ENCODE measurements at regions of chr5 and their contacts with region 1.

Region 1: GRCh38 chr5:135426102-135427082 is 20.8 kb downstream of the DCANP1 start:
- DNase-seq: no peak
- H3K4me3 ChIP-seq: no peak overlapping the region
- CTCF ChIP-seq: peak; percentile 68

Region 2: GRCh38 chr5:135154197-135154596 is 272.2 kb before region 1 on chr5:
- CTCF ChIA-PET with region 1: no interaction called
- POLR2A ChIA-PET with region 1: no interaction called
- DNase-seq: no peak
- H3K4me3 ChIP-seq: no peak overlapping the region
- CTCF ChIP-seq: no peak

Region 3: GRCh38 chr5:135332519-135333150 is 93.8 kb before region 1 on chr5:
- CTCF ChIA-PET with region 1: interaction called, 10 read pairs
- POLR2A ChIA-PET with region 1: no interaction called
- DNase-seq: no peak
- H3K4me3 ChIP-seq: no peak overlapping the region
- CTCF ChIP-seq: peak; percentile 32

Region 4: DNA sequence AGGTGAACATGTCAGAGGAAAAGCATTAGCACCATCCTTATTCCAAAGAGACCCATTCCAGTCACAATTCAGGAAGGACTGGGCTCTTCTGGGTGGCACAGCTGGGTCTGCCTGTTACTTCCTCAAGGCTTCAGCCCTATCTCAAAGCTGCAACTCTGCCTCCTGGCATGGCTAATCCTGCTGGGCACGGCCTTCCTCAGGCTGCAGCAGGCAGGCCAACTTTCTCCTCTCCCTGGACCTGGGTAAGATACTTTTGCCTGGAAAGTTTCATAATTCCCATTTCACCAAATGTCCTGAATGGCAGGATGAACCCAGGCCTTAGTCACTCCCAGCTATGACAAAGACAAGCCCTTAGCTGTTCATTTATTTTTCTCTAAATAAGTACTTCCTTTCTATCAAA is 77.5 kb before region 1 on chr5:
- CTCF ChIA-PET with region 1: interaction called, 48 read pairs
- POLR2A ChIA-PET with region 1: no interaction called
- DNase-seq: no peak
- H3K4me3 ChIP-seq: no peak overlapping the region
- CTCF ChIP-seq: no peak

Region 5: GRCh38 chr5:135400866-135401265 is 25.5 kb before region 1 on chr5:
- CTCF ChIA-PET with region 1: interaction called, 22 read pairs
- POLR2A ChIA-PET with region 1: interaction called, 3 read pairs
- DNase-seq: no peak
- H3K4me3 ChIP-seq: no peak overlapping the region
- CTCF ChIP-seq: no peak

Region 6: GRCh38 chr5:135437796-135438560 is 11.6 kb after region 1 on chr5:
- CTCF ChIA-PET with region 1: interaction called, 134 read pairs
- POLR2A ChIA-PET with region 1: interaction called, 4 read pairs
- DNase-seq: peak; percentile 68
- H3K4me3 ChIP-seq: no peak overlapping the region
- CTCF ChIP-seq: no peak